ENCODE measurements at regions of chr2 and their contacts with region 1.

Region 1: GRCh38 chr2:44044281-44044720 is 48.5 kb upstream of the LRPPRC start:
- DNase-seq: peak; percentile 67
- ATAC-seq: peak; percentile 100
- H3K4me3 Mint-ChIP-seq: no peak overlapping the region
- H3K27ac Mint-ChIP-seq: no peak overlapping the region
- H3K4me1 Mint-ChIP-seq: peaks cover 2% of the 10 kb centered on the region
- H3K27me3 Mint-ChIP-seq: peaks cover 3% of the 10 kb centered on the region
- CTCF ChIP-seq: peak; percentile 35

Region 2: DNA sequence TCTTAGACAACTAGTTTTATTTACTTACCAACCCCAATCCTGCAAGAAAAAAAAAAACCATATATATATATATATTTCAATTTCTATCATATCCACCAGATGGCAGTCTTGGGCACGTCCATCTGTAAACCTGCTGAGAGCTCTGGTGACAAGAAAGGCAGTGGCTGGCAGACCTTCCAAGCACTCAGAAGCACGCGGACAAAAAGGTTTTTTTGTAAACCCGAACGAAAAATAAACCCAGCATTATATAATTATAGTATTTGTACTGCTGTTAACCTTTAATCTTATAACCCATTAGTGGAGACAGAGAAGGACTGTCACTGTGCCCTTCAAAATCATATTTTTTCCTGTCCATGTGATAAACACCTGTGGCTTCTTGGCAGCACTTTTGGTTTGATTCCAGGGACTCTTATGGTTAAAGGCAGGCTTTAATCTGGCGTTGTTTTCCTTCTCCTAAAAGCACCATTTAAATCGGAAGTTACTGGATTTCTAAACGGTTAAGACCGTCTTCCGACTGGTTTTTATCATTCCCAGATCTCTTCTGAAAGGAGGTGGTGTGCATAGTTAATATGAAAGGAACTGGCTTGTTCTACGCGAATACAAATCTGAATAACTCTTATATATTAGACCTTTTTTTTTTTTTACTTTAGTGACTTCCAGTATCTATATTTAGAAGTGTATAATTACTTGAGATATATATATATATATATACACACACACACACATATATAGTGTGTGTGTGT is 200.0 kb after region 1 on chr2:
- CTCF ChIA-PET with region 1: interaction called, 3 read pairs
- POLR2A ChIA-PET with region 1: no interaction called
- intact Hi-C with region 1: loop called (anchors 1 kb)
- DNase-seq: no peak
- ATAC-seq: peak; percentile 91
- H3K4me3 Mint-ChIP-seq: peak overlapping the region; percentile 67
- H3K27ac Mint-ChIP-seq: peak overlapping the region; percentile 27
- H3K4me1 Mint-ChIP-seq: peaks cover 12% of the 10 kb centered on the region
- H3K27me3 Mint-ChIP-seq: no peaks in the 10 kb centered on the region
- CTCF ChIP-seq: no peak

Region 3: GRCh38 chr2:44342854-44343253 is 298.6 kb after region 1 on chr2:
- CTCF ChIA-PET with region 1: interaction called, 9 read pairs
- POLR2A ChIA-PET with region 1: no interaction called
- intact Hi-C with region 1: loop called (anchors 1 kb)
- DNase-seq: no peak
- ATAC-seq: no peak
- H3K4me3 Mint-ChIP-seq: no peak overlapping the region
- H3K27ac Mint-ChIP-seq: no peak overlapping the region
- H3K4me1 Mint-ChIP-seq: no peaks in the 10 kb centered on the region
- H3K27me3 Mint-ChIP-seq: no peaks in the 10 kb centered on the region
- CTCF ChIP-seq: no peak

Region 4: GRCh38 chr2:44392338-44392943 is 348.1 kb after region 1 on chr2:
- CTCF ChIA-PET with region 1: interaction called, 8 read pairs
- POLR2A ChIA-PET with region 1: no interaction called
- intact Hi-C with region 1: loop called (anchors 1 kb)
- DNase-seq: no peak
- ATAC-seq: no peak
- H3K4me3 Mint-ChIP-seq: no peak overlapping the region
- H3K27ac Mint-ChIP-seq: no peak overlapping the region
- H3K4me1 Mint-ChIP-seq: peaks cover 3% of the 10 kb centered on the region
- H3K27me3 Mint-ChIP-seq: no peaks in the 10 kb centered on the region
- CTCF ChIP-seq: peak; percentile 81

Region 5: DNA sequence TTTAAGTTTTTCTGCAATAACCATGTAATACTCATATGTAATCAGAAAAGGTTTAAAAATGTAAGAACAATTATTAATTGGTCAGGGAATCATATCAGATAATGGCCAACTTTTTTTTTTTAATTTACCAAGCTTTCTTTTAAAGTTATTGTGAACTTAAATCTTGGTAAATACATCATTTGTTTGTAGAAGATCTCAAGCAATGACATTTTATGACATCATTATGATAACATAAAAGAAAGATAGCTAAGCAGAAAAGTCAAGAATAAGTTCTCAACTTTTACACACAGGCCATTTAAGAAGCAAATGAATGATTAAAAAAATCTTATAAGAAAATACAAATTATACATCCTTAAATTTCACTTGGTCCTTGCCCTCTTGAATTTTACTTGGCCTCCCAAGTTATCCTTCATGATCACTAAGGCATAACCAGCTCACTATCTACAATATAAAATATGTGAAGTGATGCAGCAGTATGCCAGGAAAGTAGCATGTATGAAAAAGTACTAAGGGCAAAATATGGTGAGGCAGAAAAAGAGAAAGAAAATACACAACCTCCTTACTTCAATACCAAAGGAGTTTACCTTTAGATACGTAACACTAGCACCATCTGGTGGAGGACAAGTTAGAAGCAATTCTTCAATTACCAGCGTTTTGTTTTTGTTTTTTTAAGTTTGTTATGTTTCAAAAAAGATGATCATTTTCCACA is 1450.1 kb after region 1 on chr2:
- CTCF ChIA-PET with region 1: no interaction called
- POLR2A ChIA-PET with region 1: no interaction called
- intact Hi-C with region 1: loop called (anchors 5 kb)
- DNase-seq: no peak
- ATAC-seq: no peak
- H3K4me3 Mint-ChIP-seq: no peak overlapping the region
- H3K27ac Mint-ChIP-seq: no peak overlapping the region
- H3K4me1 Mint-ChIP-seq: peaks cover 16% of the 10 kb centered on the region
- H3K27me3 Mint-ChIP-seq: no peaks in the 10 kb centered on the region
- CTCF ChIP-seq: peak; percentile 50